ENCODE measurements at regions of chr6 and their contacts with region 1.

Region 1: DNA sequence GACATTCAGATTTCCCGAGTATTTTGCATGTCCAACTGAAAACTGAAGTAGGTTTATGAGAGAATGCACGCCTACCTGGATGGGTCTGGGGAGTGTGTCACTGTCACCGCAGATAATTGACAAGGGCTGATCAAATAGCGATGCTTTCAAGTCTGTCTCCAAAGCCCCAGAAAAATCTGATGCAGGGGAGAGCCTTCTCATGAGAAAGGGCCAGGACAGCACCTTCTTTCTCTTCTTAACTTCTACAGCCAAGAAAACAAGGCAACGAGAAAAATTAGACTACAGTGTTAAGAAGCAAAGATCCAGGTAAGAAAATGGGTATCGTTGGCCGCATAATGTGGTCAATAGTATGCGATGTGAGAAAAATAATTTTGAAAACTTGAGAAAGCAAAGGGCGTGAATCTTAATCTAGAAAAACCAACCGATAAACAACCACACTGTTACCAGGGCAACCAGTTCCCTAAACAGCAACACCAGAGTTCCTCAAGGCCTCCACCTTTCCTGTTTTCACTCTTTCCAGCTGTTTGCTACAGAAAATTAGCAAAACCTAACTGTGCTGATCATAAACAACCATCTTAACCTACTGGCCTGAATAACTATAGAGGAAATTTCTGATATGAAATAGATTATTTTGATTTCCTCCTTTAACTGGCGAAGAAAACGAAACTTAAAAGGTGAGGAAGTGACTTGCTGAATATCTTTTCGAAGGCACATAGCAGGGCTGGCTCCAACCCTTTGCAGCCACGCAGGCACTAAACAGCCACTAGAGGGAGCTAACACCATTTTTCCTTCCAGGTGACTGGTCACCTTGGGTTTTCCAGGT is 2.6 kb downstream of the TAGAP start:
- DNase-seq: peak; percentile 50 to 94 (median 69)
- ATAC-seq: peak; percentile 62 to 68 (median 64)
- H3K4me3 ChIP-seq: peak overlapping the region; percentile 69 to 95
- H3K4me3 Mint-ChIP-seq: peak overlapping the region; percentile 96 to 98 (median 96)
- H3K27ac ChIP-seq: peak overlapping the region; percentile 90
- H3K27ac Mint-ChIP-seq: peak overlapping the region; percentile 98
- H3K4me1 ChIP-seq: peaks cover 51 to 53% of the 10 kb centered on the region in 2 experiments
- H3K4me1 Mint-ChIP-seq: peaks cover 64 to 68% (median 67%) of the 10 kb centered on the region in 3 donors
- H3K27me3 ChIP-seq: no peaks in the 10 kb centered on the region
- H3K27me3 Mint-ChIP-seq: no peaks in the 10 kb centered on the region

Region 2: GRCh38 chr6:158584236-158584651 is 458.0 kb before region 1 on chr6:
- CTCF ChIA-PET with region 1: no interaction called
- POLR2A ChIA-PET with region 1: interaction called, 4 to 14 read pairs
- DNase-seq: no peak
- ATAC-seq: no peak
- H3K4me3 ChIP-seq: no peak overlapping the region
- H3K4me3 Mint-ChIP-seq: no peak overlapping the region
- H3K27ac ChIP-seq: no peak overlapping the region
- H3K27ac Mint-ChIP-seq: no peak overlapping the region
- H3K4me1 ChIP-seq: no peaks in the 10 kb centered on the region
- H3K4me1 Mint-ChIP-seq: peaks cover 0 to 4% (median 2%) of the 10 kb centered on the region in 3 donors
- H3K27me3 ChIP-seq: no peaks in the 10 kb centered on the region
- H3K27me3 Mint-ChIP-seq: no peaks in the 10 kb centered on the region

Region 3: GRCh38 chr6:159053781-159054398 is 11.7 kb after region 1 on chr6:
- CTCF ChIA-PET with region 1: interaction called in 1 of 2 experiments, 5 read pairs
- POLR2A ChIA-PET with region 1: interaction called, 3 to 12 read pairs
- DNase-seq: peak in 3 of 35 experiments; percentile 9 to 68 (median 11)
- ATAC-seq: peak in 3 of 4 experiments; percentile 44 to 62 (median 53)
- H3K4me3 ChIP-seq: no peak overlapping the region
- H3K4me3 Mint-ChIP-seq: no peak overlapping the region
- H3K27ac ChIP-seq: peak overlapping the region; percentile 22
- H3K27ac Mint-ChIP-seq: peak overlapping the region; percentile 19 to 25
- H3K4me1 ChIP-seq: peaks cover 20 to 48% of the 10 kb centered on the region in 2 experiments
- H3K4me1 Mint-ChIP-seq: peaks cover 41 to 65% (median 58%) of the 10 kb centered on the region in 3 donors
- H3K27me3 ChIP-seq: no peaks in the 10 kb centered on the region
- H3K27me3 Mint-ChIP-seq: no peaks in the 10 kb centered on the region

Region 4: GRCh38 chr6:159098636-159099106 is 56.5 kb after region 1 on chr6:
- CTCF ChIA-PET with region 1: interaction called, 28 to 65 read pairs
- POLR2A ChIA-PET with region 1: interaction called, 6 to 8 read pairs
- DNase-seq: peak in 34 of 35 experiments; percentile 39 to 90 (median 66)
- ATAC-seq: peak; percentile 74 to 84 (median 82)
- H3K4me3 ChIP-seq: peak overlapping the region in 1 of 2 donors; percentile 22
- H3K4me3 Mint-ChIP-seq: peak overlapping the region; percentile 64 to 76 (median 70)
- H3K27ac ChIP-seq: peak overlapping the region; percentile 94
- H3K27ac Mint-ChIP-seq: peak overlapping the region; percentile 95 to 96
- H3K4me1 ChIP-seq: peaks cover 34 to 64% of the 10 kb centered on the region in 2 experiments
- H3K4me1 Mint-ChIP-seq: peaks cover 63 to 85% (median 66%) of the 10 kb centered on the region in 3 donors
- H3K27me3 ChIP-seq: no peaks in the 10 kb centered on the region
- H3K27me3 Mint-ChIP-seq: no peaks in the 10 kb centered on the region

Region 5: DNA sequence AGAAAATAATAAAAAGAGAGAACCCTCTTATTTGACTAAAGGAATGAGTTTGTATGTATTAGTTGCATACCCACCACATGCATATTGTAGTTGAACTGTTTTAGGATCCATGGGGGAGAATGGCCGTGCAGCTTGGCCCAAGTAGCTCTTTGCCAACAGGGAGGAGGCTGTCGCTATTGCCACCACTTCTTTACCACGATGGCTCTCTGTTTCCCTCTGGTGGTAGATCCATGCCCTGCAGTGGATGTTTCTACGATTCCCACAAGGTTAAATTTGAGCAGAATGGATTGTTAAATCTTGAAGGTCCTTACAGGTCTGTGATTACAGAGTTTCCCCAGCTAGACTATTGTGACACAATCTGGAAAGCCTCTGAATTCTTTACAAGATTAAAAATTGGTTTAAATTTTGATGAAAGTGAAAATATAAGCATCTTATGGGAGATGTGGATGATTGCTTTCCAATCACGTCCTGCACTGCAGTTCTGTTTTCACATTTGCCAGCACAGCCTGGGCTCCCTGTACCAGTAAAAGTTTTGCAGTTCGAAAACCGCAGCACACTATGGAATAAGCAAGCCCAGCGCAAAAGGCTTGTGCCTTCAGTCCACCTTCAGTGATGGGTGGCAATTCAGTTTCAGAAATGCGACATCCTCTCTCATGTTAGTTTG is 92.6 kb after region 1 on chr6:
- CTCF ChIA-PET with region 1: interaction called, 3 to 12 read pairs
- POLR2A ChIA-PET with region 1: interaction called in 1 of 2 experiments, 3 read pairs
- DNase-seq: peak; percentile 39 to 88 (median 68)
- ATAC-seq: peak; percentile 85 to 92 (median 88)
- H3K4me3 ChIP-seq: no peak overlapping the region
- H3K4me3 Mint-ChIP-seq: no peak overlapping the region
- H3K27ac ChIP-seq: no peak overlapping the region
- H3K27ac Mint-ChIP-seq: no peak overlapping the region
- H3K4me1 ChIP-seq: no peaks in the 10 kb centered on the region
- H3K4me1 Mint-ChIP-seq: peaks cover 6 to 7% (median 6%) of the 10 kb centered on the region in 3 donors
- H3K27me3 ChIP-seq: peaks cover 0 to 16% of the 10 kb centered on the region in 2 experiments
- H3K27me3 Mint-ChIP-seq: peaks cover 0 to 6% of the 10 kb centered on the region in 2 donors

Measured in T-cell (primary cell).